Calu3 (cell line): ENCODE measurements at regions of chr11 and their contacts with region 1.

Region 1: GRCh38 chr11:58513747-58514367 is 6.0 kb upstream of the OR5B21 start:
- DNase-seq: peak; percentile 57
- H3K4me3 Mint-ChIP-seq: no peak overlapping the region
- H3K27ac Mint-ChIP-seq: no peak overlapping the region
- H3K4me1 Mint-ChIP-seq: peaks cover 22% of the 10 kb centered on the region
- H3K27me3 Mint-ChIP-seq: no peaks in the 10 kb centered on the region
- CTCF ChIP-seq: peak; percentile 59

Region 2: DNA sequence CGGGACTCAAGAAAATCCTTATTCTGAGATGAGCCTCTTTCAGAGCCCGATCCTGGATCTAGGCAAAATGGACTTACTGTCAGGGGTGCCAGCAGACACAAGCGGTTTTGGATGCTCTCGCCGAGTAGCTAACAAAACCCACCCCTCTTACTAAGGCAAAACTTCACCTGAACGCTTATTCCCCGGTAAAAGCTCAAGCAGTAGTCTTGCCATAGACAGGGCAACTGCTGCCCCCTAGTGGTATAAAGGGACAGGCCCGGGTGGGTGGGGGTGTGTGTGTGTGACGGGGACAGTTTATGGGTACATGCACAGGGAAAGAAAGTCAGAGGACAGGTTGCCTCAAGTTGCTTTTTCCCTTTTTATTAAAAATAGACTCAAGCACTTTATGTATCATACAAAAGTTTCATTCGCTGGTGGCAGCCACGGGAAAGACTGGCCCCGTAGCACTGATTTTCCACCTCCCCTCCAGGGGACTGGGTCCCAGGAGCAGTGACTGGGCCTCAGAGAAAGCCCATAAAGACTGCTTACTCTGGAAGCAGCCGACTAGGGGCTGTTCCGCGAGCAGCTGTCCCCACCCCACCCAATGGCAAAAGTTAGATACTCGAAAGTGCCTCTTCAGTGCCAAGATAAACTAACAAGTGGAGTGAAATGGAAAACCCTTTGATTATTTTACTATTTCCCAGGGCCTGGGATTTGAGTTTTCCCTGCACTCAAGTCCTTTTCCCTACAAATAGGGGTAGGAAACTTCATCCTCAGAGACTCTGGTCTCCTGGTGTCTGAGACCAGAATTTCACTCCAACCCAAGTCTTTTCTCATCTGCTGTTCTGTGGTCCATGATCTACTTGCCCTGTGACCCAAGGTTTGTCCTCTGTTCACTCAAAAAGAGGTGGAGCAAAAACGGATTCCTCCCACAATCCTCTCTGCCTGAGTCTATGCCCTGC is 868.8 kb before region 1 on chr11:
- CTCF ChIA-PET with region 1: no interaction called
- intact Hi-C with region 1: loop called (anchors 10 kb)
- DNase-seq: peak; percentile 88
- H3K4me3 Mint-ChIP-seq: no peak overlapping the region
- H3K27ac Mint-ChIP-seq: no peak overlapping the region
- H3K4me1 Mint-ChIP-seq: peaks cover 28% of the 10 kb centered on the region
- H3K27me3 Mint-ChIP-seq: peaks cover 66% of the 10 kb centered on the region
- CTCF ChIP-seq: peak; percentile 73

Region 3: DNA sequence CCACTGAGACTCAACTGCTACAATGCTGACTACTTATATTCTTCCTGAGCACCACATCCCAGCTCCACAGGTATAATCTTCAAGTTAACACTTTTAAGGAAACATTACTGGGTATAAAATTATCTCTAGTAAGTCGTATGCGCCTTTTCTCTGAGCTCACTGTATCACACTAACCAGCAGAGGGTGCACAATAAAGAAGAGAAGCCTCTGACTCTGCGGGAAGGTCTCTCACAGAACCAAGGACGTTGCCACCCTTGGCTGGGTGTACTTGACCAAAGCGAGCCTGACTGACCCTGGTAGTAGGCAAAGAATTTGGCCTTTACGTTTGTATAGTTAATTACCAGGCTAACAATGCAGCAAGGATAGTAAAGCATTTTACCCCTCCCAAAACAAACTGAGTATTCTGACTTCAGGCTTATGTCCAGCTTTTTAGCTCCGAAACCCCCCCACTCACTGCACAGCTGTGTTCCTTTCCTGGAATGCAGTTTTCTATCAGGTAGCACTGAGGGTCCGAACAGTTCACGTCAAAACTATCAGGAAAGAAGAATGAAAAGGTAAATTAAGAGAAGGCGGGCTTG is 762.1 kb before region 1 on chr11 and contains the start of gene BTBD18:
- CTCF ChIA-PET with region 1: no interaction called
- intact Hi-C with region 1: loop called (anchors 2 kb)
- DNase-seq: peak; percentile 54
- H3K4me3 Mint-ChIP-seq: no peak within 1 kb of the TSS
- H3K27ac Mint-ChIP-seq: peak within 1 kb of the TSS; percentile 53
- H3K4me1 Mint-ChIP-seq: peaks cover 21% of the 10 kb centered on the region
- H3K27me3 Mint-ChIP-seq: no peaks in the 10 kb centered on the region
- CTCF ChIP-seq: peak; percentile 54
- total RNA-seq, gene BTBD18: not detected in 2 replicates

Region 4: DNA sequence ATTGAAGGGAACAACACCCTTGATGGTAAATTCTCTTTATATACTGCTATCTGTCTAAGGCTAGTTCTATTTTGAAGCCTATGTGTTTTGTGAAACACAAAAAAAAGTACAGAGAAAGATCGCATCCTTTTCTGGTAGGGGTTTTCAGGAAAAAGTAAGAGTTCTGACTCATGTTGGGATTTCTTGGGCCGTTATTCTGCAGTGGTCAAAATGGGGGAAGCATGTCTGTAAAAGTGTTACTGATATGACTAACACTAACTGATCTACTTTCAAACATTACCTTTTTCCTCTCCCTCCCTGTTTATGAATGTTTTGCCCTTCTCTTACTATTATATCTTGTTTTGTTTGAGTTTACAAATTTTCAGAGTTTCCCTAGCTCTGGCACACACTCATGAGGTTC is 698.4 kb before region 1 on chr11:
- CTCF ChIA-PET with region 1: no interaction called
- intact Hi-C with region 1: loop called (anchors 5 kb)
- DNase-seq: no peak
- H3K4me3 Mint-ChIP-seq: no peak overlapping the region
- H3K27ac Mint-ChIP-seq: no peak overlapping the region
- H3K4me1 Mint-ChIP-seq: peaks cover 6% of the 10 kb centered on the region
- H3K27me3 Mint-ChIP-seq: no peaks in the 10 kb centered on the region
- CTCF ChIP-seq: no peak

Region 5: DNA sequence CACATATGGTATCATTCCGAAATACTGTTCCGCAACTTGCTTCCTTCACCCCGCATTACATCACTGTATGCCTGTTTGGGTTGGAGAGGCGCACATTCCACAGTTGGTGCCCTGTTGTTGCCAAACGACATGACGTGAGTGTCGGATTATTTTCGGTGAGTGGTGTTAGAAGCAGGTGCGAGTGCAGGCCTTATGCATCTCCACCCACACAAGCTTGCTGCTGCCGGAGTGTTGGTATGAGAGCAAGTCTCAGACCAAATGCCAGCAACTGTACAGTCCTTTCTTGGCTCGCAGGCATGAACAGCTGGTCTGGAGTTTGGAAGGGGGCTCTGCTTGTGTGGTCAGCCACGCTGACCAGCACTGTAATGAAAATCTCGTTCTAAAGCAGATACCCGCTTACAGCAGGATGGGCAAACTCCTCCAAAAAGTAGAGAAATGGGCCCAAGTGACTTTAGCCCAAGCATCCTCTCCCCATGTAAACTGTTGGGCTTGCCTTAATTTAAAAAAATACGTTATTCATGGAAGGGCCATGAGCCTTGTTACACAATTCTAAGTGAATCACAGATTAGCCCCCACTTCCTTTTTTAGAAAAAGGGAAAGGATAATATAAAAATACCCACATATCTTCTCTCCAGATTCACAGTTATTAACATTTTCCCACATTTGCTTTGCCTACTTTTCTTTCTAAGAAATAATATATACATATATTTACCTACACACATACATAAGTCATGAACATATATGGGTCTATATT is 538.8 kb before region 1 on chr11:
- CTCF ChIA-PET with region 1: no interaction called
- intact Hi-C with region 1: loop called (anchors 10 kb)
- DNase-seq: no peak
- H3K4me3 Mint-ChIP-seq: no peak overlapping the region
- H3K27ac Mint-ChIP-seq: no peak overlapping the region
- H3K4me1 Mint-ChIP-seq: peaks cover 64% of the 10 kb centered on the region
- H3K27me3 Mint-ChIP-seq: no peaks in the 10 kb centered on the region
- CTCF ChIP-seq: no peak

Region 6: GRCh38 chr11:58059007-58059350 is 454.9 kb before region 1 on chr11:
- CTCF ChIA-PET with region 1: no interaction called
- intact Hi-C with region 1: loop called (anchors 10 kb)
- DNase-seq: peak; percentile 47
- H3K4me3 Mint-ChIP-seq: no peak overlapping the region
- H3K27ac Mint-ChIP-seq: peak overlapping the region; percentile 88
- H3K4me1 Mint-ChIP-seq: peaks cover 45% of the 10 kb centered on the region
- H3K27me3 Mint-ChIP-seq: no peaks in the 10 kb centered on the region
- CTCF ChIP-seq: no peak

Region 7: GRCh38 chr11:58805065-58805464 is 291.2 kb after region 1 on chr11:
- CTCF ChIA-PET with region 1: no interaction called
- intact Hi-C with region 1: no loop called
- DNase-seq: no peak
- H3K4me3 Mint-ChIP-seq: no peak overlapping the region
- H3K27ac Mint-ChIP-seq: no peak overlapping the region
- H3K4me1 Mint-ChIP-seq: no peaks in the 10 kb centered on the region
- H3K27me3 Mint-ChIP-seq: peaks cover 41% of the 10 kb centered on the region
- CTCF ChIP-seq: no peak